Activated CD4-positive, alpha-beta T cell treated with anti-CD3 and anti-CD28 coated beads, Interleukin-2, amount 10 ng/mL, durations not matched to agents 24 days and 14 days (primary cell): ENCODE measurements at regions of chr4 and their contacts with region 1.

Region 1: GRCh38 chr4:184287697-184288255 is 70.1 kb upstream of the ENPP6 start:
- DNase-seq: peak; percentile 64
- H3K4me3 Mint-ChIP-seq: peak overlapping the region; percentile 57
- H3K27ac Mint-ChIP-seq: peak overlapping the region; percentile 89
- H3K4me1 Mint-ChIP-seq: peaks cover 45% of the 10 kb centered on the region
- H3K27me3 Mint-ChIP-seq: no peaks in the 10 kb centered on the region

Region 2: DNA sequence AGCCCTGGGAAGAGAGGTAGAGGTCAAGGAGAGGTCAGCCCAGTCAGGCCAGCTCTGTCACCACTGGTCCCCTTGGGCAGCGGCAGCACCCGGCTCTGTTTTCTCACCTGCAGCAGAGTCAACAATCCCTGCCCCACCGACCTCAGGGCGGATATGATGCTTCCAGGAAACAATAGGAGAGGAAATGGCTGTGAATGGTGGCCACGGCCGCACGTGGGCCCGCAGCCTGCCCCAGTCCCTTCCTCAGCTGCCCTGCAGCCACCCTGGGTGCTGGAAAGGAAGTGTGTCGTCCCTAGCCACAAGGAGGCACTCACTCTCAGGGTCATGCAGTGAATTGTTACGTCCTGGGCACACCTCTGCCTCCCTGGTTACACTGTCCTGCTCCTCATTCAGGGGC is 22.4 kb after region 1 on chr4:
- intact Hi-C with region 1: loop called (anchors 1 kb)
- DNase-seq: peak; percentile 78
- H3K4me3 Mint-ChIP-seq: peak overlapping the region; percentile 16
- H3K27ac Mint-ChIP-seq: peak overlapping the region; percentile 66
- H3K4me1 Mint-ChIP-seq: peaks cover 65% of the 10 kb centered on the region
- H3K27me3 Mint-ChIP-seq: no peaks in the 10 kb centered on the region

Region 3: DNA sequence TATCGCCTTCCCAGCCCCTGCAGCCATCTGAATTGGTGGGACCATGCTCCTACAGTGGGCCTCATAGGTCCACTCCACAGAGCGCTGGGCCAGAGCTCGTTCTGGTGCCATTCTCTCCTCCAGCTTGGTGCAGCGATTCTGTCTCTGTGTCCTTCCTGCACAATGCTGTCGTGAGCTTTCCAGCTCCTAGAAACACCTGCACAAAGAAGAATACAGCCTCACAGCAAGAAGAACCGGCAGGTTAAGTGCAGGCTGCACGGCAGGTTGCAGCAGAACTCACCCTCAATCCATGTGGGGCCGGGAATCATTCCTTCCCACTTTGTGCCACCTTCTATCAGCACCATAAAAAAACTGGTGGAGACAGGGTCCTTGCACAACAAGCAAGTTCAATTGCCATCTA is 31.1 kb after region 1 on chr4:
- intact Hi-C with region 1: loop called (anchors 1 kb)
- DNase-seq: peak; percentile 56
- H3K4me3 Mint-ChIP-seq: peak overlapping the region; percentile 21
- H3K27ac Mint-ChIP-seq: peak overlapping the region; percentile 93
- H3K4me1 Mint-ChIP-seq: peaks cover 50% of the 10 kb centered on the region
- H3K27me3 Mint-ChIP-seq: no peaks in the 10 kb centered on the region

Region 4: DNA sequence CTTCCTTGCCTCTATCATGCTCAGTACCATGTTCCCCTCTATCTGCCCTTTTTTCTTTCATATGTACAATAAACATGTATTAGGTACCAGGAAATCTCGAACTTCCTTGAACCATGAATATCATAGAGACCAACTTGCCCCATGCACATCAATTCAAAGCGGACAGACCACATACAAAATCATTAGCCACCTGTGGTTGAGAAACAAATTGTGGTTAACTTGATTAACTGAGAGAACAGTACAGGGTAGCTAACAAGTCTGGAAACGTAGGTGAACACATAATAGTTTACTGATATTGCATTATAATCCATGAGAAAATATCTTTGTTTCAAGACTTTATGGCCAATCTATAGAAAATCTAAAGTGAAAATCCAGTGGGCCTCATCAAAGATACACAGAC is 353.2 kb after region 1 on chr4:
- intact Hi-C with region 1: no loop called
- DNase-seq: no peak
- H3K4me3 Mint-ChIP-seq: no peak overlapping the region
- H3K27ac Mint-ChIP-seq: no peak overlapping the region
- H3K4me1 Mint-ChIP-seq: peaks cover 45% of the 10 kb centered on the region
- H3K27me3 Mint-ChIP-seq: no peaks in the 10 kb centered on the region